ENCODE measurements at regions of chr10 and their contacts with region 1.

Region 1: GRCh38 chr10:116385994-116386809 is 41.4 kb upstream of the PNLIPRP3 start:
- DNase-seq: peak; percentile 26
- ATAC-seq: peak; percentile 61
- H3K4me3 ChIP-seq: no peak overlapping the region
- H3K27ac ChIP-seq: no peak overlapping the region
- H3K4me1 ChIP-seq: no peaks in the 10 kb centered on the region
- H3K27me3 ChIP-seq: no peaks in the 10 kb centered on the region
- CTCF ChIP-seq: peak; percentile 64
- POLR2A ChIP-seq: no peak
- RAD21 ChIP-seq: peak; percentile 66

Region 2: DNA sequence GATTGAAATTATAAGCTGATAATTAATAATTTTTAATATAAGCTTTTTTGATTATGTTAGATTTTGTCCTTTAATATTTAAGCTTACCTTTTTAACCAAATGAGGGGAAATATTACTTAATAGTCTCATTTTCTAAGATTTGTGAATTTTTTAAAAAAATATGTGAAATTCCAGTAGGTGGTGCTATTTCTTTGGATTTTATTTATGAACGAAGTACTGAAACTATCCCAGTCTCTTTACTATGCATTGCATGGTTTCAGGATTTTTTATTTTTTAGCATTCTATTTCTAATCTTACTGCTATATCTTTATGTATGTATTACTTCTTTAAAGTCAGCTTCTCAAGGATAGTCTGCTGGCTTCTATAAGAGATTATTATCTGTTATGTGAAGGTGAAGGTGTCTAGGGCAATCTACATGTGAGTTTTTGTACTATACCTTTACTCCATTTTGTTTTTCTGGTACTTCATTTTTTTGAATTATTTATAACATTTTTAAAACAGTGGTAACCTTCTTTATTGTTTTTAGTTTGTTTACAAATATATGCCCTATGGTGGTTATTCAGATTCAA is 1214.7 kb before region 1 on chr10:
- CTCF ChIA-PET with region 1: no interaction called
- POLR2A ChIA-PET with region 1: no interaction called
- dilution Hi-C with region 1: no loop called
- in situ Hi-C with region 1: no loop called
- intact Hi-C with region 1: loop called (anchors 10 kb)
- DNase-seq: no peak
- ATAC-seq: no peak
- H3K4me3 ChIP-seq: no peak overlapping the region
- H3K27ac ChIP-seq: no peak overlapping the region
- H3K4me1 ChIP-seq: no peaks in the 10 kb centered on the region
- H3K27me3 ChIP-seq: no peaks in the 10 kb centered on the region
- CTCF ChIP-seq: peak; percentile 49
- POLR2A ChIP-seq: no peak
- RAD21 ChIP-seq: no peak

Region 3: DNA sequence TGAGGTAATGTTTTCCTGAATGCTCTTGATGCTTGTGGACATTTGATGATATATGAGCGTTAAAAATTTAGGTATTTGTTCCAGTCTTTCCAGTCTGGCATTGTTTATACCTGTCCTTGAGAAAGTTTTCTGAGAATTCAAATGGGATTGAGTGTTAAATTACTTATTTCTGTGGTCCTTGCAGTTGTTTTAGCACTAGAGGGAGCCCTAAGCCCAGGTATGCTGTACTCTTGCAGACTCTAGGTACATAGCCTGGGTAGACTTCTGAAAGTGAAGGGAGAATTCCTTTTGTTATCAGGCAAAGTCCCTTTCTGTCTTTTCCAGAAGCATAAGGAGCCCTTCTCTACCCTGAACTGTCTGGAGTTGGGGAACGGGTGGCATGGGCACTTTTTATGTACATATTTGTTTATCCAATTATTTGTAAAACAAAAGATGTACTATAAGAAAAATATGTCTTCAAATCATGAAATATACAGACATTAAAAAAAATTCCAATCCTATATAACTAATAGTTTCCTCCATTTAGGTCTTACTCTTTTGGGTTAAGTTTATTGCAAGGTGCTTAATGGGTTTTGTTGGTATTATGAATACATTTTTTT is 1030.9 kb before region 1 on chr10:
- CTCF ChIA-PET with region 1: interaction called, 3 read pairs
- POLR2A ChIA-PET with region 1: no interaction called
- dilution Hi-C with region 1: no loop called
- in situ Hi-C with region 1: loop called (anchors 25 kb)
- intact Hi-C with region 1: loop called (anchors 1 kb)
- DNase-seq: peak; percentile 63
- ATAC-seq: peak; percentile 66
- H3K4me3 ChIP-seq: no peak overlapping the region
- H3K27ac ChIP-seq: no peak overlapping the region
- H3K4me1 ChIP-seq: no peaks in the 10 kb centered on the region
- H3K27me3 ChIP-seq: no peaks in the 10 kb centered on the region
- CTCF ChIP-seq: peak; percentile 79
- POLR2A ChIP-seq: no peak
- RAD21 ChIP-seq: peak; percentile 82

Region 4: DNA sequence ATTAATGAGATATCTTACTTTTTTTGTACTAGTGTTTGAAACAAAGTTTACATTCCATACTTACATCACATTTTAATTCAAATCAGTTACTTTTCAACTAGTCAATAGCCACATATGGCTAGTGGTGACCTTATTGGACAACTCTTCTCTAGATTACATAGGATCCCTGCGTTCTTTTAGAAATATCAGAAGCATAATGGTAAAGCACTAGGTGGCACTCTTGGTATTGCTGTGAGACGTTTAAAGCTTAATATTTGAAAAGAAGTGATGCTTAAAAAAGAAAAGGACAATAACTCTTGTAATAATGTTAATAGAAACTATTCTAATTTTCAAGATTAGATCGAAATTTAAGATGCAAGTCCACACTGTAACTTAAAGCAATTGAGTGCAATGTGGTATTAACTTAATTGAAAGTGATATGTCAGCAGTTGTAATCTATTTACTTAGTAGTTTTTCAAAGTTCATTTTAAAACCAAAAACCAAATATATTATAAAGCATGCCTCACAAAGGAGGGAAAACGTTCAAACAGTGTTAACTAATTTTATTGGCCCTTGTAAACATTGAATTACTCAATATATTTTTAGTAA is 953.9 kb before region 1 on chr10:
- CTCF ChIA-PET with region 1: interaction called, 7 read pairs
- POLR2A ChIA-PET with region 1: no interaction called
- dilution Hi-C with region 1: no loop called
- in situ Hi-C with region 1: no loop called
- intact Hi-C with region 1: loop called (anchors 1 kb)
- DNase-seq: peak; percentile 6
- ATAC-seq: peak; percentile 53
- H3K4me3 ChIP-seq: no peak overlapping the region
- H3K27ac ChIP-seq: no peak overlapping the region
- H3K4me1 ChIP-seq: no peaks in the 10 kb centered on the region
- H3K27me3 ChIP-seq: no peaks in the 10 kb centered on the region
- CTCF ChIP-seq: peak; percentile 47
- POLR2A ChIP-seq: no peak
- RAD21 ChIP-seq: peak; percentile 58

Region 5: DNA sequence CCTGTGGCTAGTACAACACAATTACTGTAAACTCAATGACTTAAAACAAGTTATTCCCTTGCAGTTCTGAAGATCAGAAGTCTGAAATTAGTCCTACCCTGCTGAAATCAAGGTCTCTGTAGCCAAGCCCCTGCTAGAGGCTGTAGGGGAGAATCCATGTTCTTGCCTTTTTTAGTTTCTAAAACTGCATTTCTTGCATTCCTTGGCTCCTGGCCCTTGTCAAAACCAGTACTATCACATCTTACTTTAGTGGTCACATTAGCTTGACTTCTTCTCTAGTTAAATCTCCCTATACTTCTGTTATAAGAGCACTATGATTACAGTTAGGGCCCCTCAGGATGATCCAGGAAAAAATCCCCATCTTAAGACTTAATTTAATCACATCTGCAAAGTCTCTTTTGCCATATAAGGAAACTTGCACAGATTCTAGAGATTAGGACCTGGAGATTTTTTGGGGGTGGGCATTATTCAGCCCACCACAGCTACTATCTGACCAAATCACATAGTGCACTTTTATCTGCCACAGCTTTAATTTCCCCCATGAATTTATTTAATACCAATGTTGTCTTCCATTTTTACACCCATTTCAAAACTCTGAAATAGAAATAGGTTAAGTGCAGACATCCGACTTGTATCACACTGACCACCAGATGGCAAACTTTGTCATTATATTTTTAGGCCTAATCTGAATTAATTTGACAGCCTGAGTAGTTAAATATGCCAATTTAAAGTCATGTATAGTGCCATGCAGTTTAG is 680.0 kb before region 1 on chr10:
- CTCF ChIA-PET with region 1: interaction called, 10 read pairs
- POLR2A ChIA-PET with region 1: no interaction called
- dilution Hi-C with region 1: no loop called
- in situ Hi-C with region 1: no loop called
- intact Hi-C with region 1: loop called (anchors 1 kb)
- DNase-seq: peak; percentile 30
- ATAC-seq: peak; percentile 77
- H3K4me3 ChIP-seq: no peak overlapping the region
- H3K27ac ChIP-seq: no peak overlapping the region
- H3K4me1 ChIP-seq: no peaks in the 10 kb centered on the region
- H3K27me3 ChIP-seq: no peaks in the 10 kb centered on the region
- CTCF ChIP-seq: peak; percentile 64
- POLR2A ChIP-seq: no peak
- RAD21 ChIP-seq: peak; percentile 54

Region 6: GRCh38 chr10:115801992-115802391 is 584.2 kb before region 1 on chr10:
- CTCF ChIA-PET with region 1: interaction called, 3 read pairs
- POLR2A ChIA-PET with region 1: no interaction called
- dilution Hi-C with region 1: no loop called
- in situ Hi-C with region 1: no loop called
- intact Hi-C with region 1: loop called (anchors 2 kb)
- DNase-seq: peak; percentile 3
- ATAC-seq: no peak
- H3K4me3 ChIP-seq: no peak overlapping the region
- H3K27ac ChIP-seq: no peak overlapping the region
- H3K4me1 ChIP-seq: no peaks in the 10 kb centered on the region
- H3K27me3 ChIP-seq: no peaks in the 10 kb centered on the region
- CTCF ChIP-seq: no peak
- POLR2A ChIP-seq: no peak
- RAD21 ChIP-seq: no peak

Region 7: DNA sequence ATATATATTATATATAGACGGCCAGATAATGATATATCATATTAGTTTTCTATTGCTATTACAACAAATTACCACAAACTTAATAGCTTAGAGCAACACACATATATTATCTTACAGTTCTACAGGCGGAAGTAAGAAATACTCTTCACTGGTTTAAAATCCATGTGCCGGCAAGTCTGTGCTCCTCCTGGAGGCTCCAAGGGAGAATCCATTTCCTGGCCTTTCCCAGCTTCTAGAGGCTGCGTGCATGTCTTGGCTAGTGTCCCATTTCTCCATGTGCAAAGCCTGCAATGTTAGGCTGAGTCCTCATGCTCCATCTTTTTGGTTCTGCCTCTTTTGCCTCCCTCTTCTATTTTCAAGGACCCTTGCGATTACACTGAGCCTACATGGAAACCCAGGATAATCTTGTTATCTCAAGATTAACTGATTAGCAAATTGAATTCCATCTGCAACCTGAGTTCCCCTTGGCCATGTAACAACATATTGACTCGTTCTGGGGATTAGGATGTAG is 17.6 kb after region 1 on chr10:
- CTCF ChIA-PET with region 1: no interaction called
- POLR2A ChIA-PET with region 1: no interaction called
- dilution Hi-C with region 1: no loop called
- in situ Hi-C with region 1: no loop called
- intact Hi-C with region 1: no loop called
- DNase-seq: no peak
- ATAC-seq: no peak
- H3K4me3 ChIP-seq: no peak overlapping the region
- H3K27ac ChIP-seq: no peak overlapping the region
- H3K4me1 ChIP-seq: no peaks in the 10 kb centered on the region
- H3K27me3 ChIP-seq: no peaks in the 10 kb centered on the region
- CTCF ChIP-seq: no peak
- POLR2A ChIP-seq: no peak
- RAD21 ChIP-seq: no peak

Region 8: GRCh38 chr10:116444527-116445142 is 58.4 kb after region 1 on chr10:
- CTCF ChIA-PET with region 1: interaction called, 11 read pairs
- POLR2A ChIA-PET with region 1: no interaction called
- dilution Hi-C with region 1: no loop called
- in situ Hi-C with region 1: no loop called
- intact Hi-C with region 1: no loop called
- DNase-seq: peak; percentile 31
- ATAC-seq: peak; percentile 73
- H3K4me3 ChIP-seq: no peak overlapping the region
- H3K27ac ChIP-seq: no peak overlapping the region
- H3K4me1 ChIP-seq: no peaks in the 10 kb centered on the region
- H3K27me3 ChIP-seq: no peaks in the 10 kb centered on the region
- CTCF ChIP-seq: peak; percentile 67
- POLR2A ChIP-seq: no peak
- RAD21 ChIP-seq: peak; percentile 47